Sigmoid colon (tissue), 7 donors: ENCODE measurements at regions of chr3 and their contacts with region 1.

Region 1: DNA sequence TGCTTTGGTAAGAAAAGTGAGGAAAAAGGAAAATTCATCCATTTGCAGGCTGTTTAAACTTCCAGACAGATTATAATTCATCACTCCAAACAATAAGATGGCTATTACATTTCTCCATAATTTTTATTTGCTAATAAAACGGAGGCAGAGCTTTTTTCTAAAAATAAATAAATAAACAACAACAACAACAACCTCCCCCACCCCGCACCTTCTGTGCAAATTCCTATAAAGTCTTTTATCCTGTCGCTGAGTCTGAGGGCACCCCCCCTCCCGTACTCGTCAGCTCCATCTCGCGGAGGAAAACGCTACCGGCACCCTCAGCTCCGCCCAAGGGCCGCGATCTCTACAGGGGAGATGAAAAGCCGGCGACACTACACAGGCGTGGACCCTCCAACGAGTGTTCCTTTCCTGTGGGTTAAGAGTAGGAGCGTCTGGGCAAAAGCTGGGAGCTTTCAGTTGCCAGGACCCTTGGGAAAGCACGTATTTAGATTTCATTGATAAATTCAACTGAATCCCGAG is 1.0 kb upstream of the ATP1B3 start:
- DNase-seq: peak; percentile 94
- H3K4me3 ChIP-seq: peak overlapping the region; percentile 78 to 96 (median 84)
- H3K27ac ChIP-seq: peak overlapping the region; percentile 100
- H3K4me1 ChIP-seq: peaks cover 0 to 33% (median 28%) of the 10 kb centered on the region in 4 donors
- H3K27me3 ChIP-seq: no peaks in the 10 kb centered on the region
- CTCF ChIP-seq: peak; percentile 79 to 92 (median 89)
- EP300 ChIP-seq: no peak
- POLR2A ChIP-seq: no peak

Region 2: GRCh38 chr3:141487521-141488252 is 387.7 kb before region 1 on chr3:
- intact Hi-C with region 1: loop called (anchors 5 kb)
- DNase-seq: peak; percentile 85
- H3K4me3 ChIP-seq: peak overlapping the region; percentile 60 to 97 (median 91)
- H3K27ac ChIP-seq: peak overlapping the region; percentile 92 to 98 (median 96)
- H3K4me1 ChIP-seq: peaks cover 0 to 24% (median 11%) of the 10 kb centered on the region in 4 donors
- H3K27me3 ChIP-seq: no peaks in the 10 kb centered on the region
- CTCF ChIP-seq: peak in 1 of 4 experiments; percentile 9
- EP300 ChIP-seq: no peak
- POLR2A ChIP-seq: peak in 1 of 2 donors; percentile 39

Region 3: GRCh38 chr3:141605883-141606282 is 269.6 kb before region 1 on chr3:
- intact Hi-C with region 1: no loop called
- DNase-seq: no peak
- H3K4me3 ChIP-seq: no peak overlapping the region
- H3K27ac ChIP-seq: peak overlapping the region in 3 of 4 donors; percentile 7 to 90 (median 87)
- H3K4me1 ChIP-seq: peaks cover 0 to 29% (median 13%) of the 10 kb centered on the region in 4 donors
- H3K27me3 ChIP-seq: no peaks in the 10 kb centered on the region
- CTCF ChIP-seq: no peak
- EP300 ChIP-seq: no peak
- POLR2A ChIP-seq: no peak

Region 4: DNA sequence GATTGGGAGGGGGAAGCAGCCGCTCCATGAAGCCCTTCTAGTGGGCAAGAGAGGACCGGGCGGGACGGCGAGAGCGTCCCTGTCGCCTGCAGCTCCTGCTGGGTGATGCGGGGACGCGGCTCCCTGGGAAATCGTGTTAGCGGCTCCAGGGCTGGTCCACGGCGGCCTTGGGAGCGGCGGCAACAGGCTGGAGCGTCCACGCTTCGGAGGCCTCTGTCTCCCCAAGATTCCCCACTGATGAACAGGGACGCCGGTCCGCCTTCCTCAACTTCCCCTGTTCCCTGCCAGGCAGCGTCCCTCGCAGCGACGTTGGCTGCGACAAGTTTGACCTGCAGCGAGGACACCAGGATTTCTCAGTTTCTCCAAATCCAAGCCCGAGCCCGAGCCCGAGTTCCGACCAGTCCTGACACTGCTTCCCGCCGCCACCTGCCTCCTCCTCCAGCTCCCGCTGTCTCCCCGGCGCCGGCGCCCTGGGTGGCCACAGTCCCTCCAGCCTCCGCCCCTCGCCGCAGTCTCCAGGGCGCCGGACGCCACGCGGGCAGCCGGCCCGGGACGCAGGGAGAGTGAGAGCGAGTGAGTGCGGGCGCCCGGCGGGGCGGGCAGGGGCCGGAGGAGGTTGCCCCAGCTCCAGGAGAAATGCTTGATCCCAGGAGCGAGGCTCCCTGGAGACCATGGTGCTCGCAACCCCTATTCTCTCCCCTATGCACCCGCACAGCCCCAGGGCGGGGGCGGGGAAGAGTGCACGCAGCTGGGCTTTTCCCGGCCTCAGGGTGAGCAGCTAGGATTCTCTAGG is 215.4 kb before region 1 on chr3:
- intact Hi-C with region 1: loop called (anchors 2 kb)
- DNase-seq: peak; percentile 90
- H3K4me3 ChIP-seq: peak overlapping the region; percentile 53 to 73 (median 58)
- H3K27ac ChIP-seq: peak overlapping the region; percentile 64 to 94 (median 88)
- H3K4me1 ChIP-seq: peaks cover 0 to 52% (median 42%) of the 10 kb centered on the region in 4 donors
- H3K27me3 ChIP-seq: no peaks in the 10 kb centered on the region
- CTCF ChIP-seq: no peak
- EP300 ChIP-seq: no peak
- POLR2A ChIP-seq: peak; percentile 73 to 83

Region 5: GRCh38 chr3:141796081-141796888 is 79.1 kb before region 1 on chr3:
- intact Hi-C with region 1: loop called (anchors 1 kb)
- DNase-seq: peak; percentile 86
- H3K4me3 ChIP-seq: peak overlapping the region in 2 of 4 donors; percentile 44 to 46
- H3K27ac ChIP-seq: peak overlapping the region; percentile 78 to 86 (median 85)
- H3K4me1 ChIP-seq: peaks cover 0 to 47% (median 38%) of the 10 kb centered on the region in 4 donors
- H3K27me3 ChIP-seq: no peaks in the 10 kb centered on the region
- CTCF ChIP-seq: no peak
- EP300 ChIP-seq: peak in 2 of 4 donors; percentile 18 to 57
- POLR2A ChIP-seq: no peak